ENCODE measurements at regions of chr12 and their contacts with region 1.

Region 1: GRCh38 chr12:73935817-73936216 is 601.8 kb upstream of the ATXN7L3B start:
- DNase-seq: peak; percentile 32
- H3K4me3 Mint-ChIP-seq: no peak overlapping the region
- H3K27ac Mint-ChIP-seq: no peak overlapping the region
- H3K4me1 Mint-ChIP-seq: no peaks in the 10 kb centered on the region
- H3K27me3 Mint-ChIP-seq: no peaks in the 10 kb centered on the region
- CTCF ChIP-seq: peak; percentile 41

Region 2: GRCh38 chr12:73833746-73834145 is 102.1 kb before region 1 on chr12:
- CTCF ChIA-PET with region 1: no interaction called
- POLR2A ChIA-PET with region 1: no interaction called
- intact Hi-C with region 1: no loop called
- DNase-seq: no peak
- H3K4me3 Mint-ChIP-seq: no peak overlapping the region
- H3K27ac Mint-ChIP-seq: no peak overlapping the region
- H3K4me1 Mint-ChIP-seq: no peaks in the 10 kb centered on the region
- H3K27me3 Mint-ChIP-seq: no peaks in the 10 kb centered on the region
- CTCF ChIP-seq: no peak

Region 3: DNA sequence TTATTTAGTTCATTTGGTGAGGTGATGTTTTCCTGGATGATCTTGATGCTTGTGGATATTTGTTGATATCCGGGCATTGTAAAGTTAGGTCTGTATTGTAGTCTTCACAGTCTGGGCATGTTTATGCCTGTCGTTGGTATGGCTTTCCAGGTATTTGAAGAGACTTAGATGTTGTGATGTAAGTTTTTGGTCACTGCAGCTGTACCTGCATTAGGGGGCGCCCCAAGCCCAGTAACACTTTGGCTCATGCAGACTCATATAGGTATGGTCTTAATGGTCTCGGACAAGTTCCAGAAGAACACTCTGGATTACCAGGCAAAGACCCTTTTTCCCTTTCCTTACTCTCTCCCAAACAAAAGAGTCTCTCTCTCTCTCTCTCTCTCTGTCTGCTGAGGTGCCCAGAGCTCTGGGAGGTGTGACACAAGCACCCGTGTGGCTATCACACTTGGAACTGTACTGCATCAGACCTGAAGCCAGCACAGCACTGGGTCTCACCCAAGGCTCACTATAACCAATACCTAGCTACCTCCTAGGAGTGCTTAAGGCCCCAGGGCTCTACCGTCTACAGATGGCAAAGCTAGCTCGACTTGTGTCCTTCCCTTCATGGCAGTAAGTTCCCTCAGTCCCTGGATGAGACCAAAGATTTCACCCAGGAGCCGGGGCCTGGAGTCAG is 176.0 kb after region 1 on chr12:
- CTCF ChIA-PET with region 1: interaction called, 3 read pairs
- POLR2A ChIA-PET with region 1: no interaction called
- intact Hi-C with region 1: loop called (anchors 5 kb)
- DNase-seq: peak; percentile 63
- H3K4me3 Mint-ChIP-seq: no peak overlapping the region
- H3K27ac Mint-ChIP-seq: no peak overlapping the region
- H3K4me1 Mint-ChIP-seq: peaks cover 7% of the 10 kb centered on the region
- H3K27me3 Mint-ChIP-seq: no peaks in the 10 kb centered on the region
- CTCF ChIP-seq: peak; percentile 37

Region 4: GRCh38 chr12:74317078-74317601 is 381.3 kb after region 1 on chr12:
- CTCF ChIA-PET with region 1: interaction called, 16 read pairs
- POLR2A ChIA-PET with region 1: no interaction called
- intact Hi-C with region 1: loop called (anchors 1 kb)
- DNase-seq: peak; percentile 62
- H3K4me3 Mint-ChIP-seq: no peak overlapping the region
- H3K27ac Mint-ChIP-seq: no peak overlapping the region
- H3K4me1 Mint-ChIP-seq: peaks cover 14% of the 10 kb centered on the region
- H3K27me3 Mint-ChIP-seq: no peaks in the 10 kb centered on the region
- CTCF ChIP-seq: peak; percentile 52

Region 5: GRCh38 chr12:74365178-74365964 is 429.6 kb after region 1 on chr12:
- CTCF ChIA-PET with region 1: no interaction called
- POLR2A ChIA-PET with region 1: no interaction called
- intact Hi-C with region 1: loop called (anchors 1 kb)
- DNase-seq: peak; percentile 50
- H3K4me3 Mint-ChIP-seq: no peak overlapping the region
- H3K27ac Mint-ChIP-seq: no peak overlapping the region
- H3K4me1 Mint-ChIP-seq: peaks cover 5% of the 10 kb centered on the region
- H3K27me3 Mint-ChIP-seq: no peaks in the 10 kb centered on the region
- CTCF ChIP-seq: no peak

Region 6: GRCh38 chr12:74646831-74647230 is 711.0 kb after region 1 on chr12:
- CTCF ChIA-PET with region 1: interaction called, 3 read pairs
- POLR2A ChIA-PET with region 1: no interaction called
- intact Hi-C with region 1: loop called (anchors 5 kb)
- DNase-seq: peak; percentile 51
- H3K4me3 Mint-ChIP-seq: no peak overlapping the region
- H3K27ac Mint-ChIP-seq: no peak overlapping the region
- H3K4me1 Mint-ChIP-seq: no peaks in the 10 kb centered on the region
- H3K27me3 Mint-ChIP-seq: no peaks in the 10 kb centered on the region
- CTCF ChIP-seq: peak; percentile 29